ENCODE measurements at regions of chr19 and their contacts with region 1.

Region 1: DNA sequence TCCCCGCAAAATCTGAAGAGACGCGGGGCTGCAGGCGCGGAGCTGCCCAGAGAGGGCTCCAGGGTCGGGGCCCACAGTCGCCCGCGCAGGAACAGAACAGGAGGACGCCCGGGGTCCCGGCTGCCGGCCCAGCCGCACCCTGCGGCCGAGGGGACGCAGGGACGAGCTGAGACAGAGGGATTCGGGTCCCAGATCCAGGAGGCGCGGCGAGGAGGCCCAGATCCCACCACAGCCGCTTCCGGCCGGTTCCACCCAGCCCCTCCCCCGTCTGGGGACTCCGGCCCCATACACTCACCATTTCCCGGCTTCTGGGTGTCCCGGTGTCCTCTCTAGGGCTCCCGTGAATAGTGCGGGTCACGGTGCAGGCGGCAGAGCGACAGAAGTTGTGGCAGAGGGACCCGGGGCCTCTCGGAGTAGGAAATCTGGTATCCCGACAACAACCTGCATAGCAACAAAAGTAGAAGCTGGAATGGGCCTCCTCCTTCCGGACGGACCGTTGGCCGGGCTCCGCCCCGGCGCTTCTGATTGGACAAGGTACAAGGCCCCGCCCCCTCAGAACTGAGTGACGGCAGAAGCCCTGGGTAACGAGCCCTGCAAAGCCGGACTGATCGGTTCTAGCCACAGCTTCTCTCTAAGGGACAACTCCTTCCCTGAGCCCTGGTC is at the start of gene ZNF20:
- DNase-seq: peak; percentile 90
- ATAC-seq: peak; percentile 96
- H3K4me3 ChIP-seq: peak within 1 kb of the TSS; percentile 85 to 96 (median 93)
- H3K27ac ChIP-seq: peak within 1 kb of the TSS; percentile 86
- H3K4me1 ChIP-seq: peaks cover 23% of the 10 kb centered on the region
- H3K27me3 ChIP-seq: no peaks in the 10 kb centered on the region; a peak in 1 of 5 replicates
- CTCF ChIP-seq: no peak; the same call in none of the 2 replicates
- EP300 ChIP-seq: no peak
- POLR2A ChIP-seq: peak; percentile 60 to 73; a peak in 3 of 4 replicates
- RAD21 ChIP-seq: no peak
- total RNA-seq, gene ZNF20: 8.0 and 9.7 TPM in 2 replicates

Region 2: GRCh38 chr19:11798391-11799330 is 341.4 kb before region 1 on chr19 and contains the start of gene ZNF491:
- CTCF ChIA-PET with region 1: no interaction called
- POLR2A ChIA-PET with region 1: no interaction called
- in situ Hi-C with region 1: no loop called
- intact Hi-C with region 1: loop called (anchors 5 kb)
- DNase-seq: peak; percentile 87
- ATAC-seq: peak; percentile 98
- H3K4me3 ChIP-seq: peak within 1 kb of the TSS; percentile 63 to 90 (median 79)
- H3K27ac ChIP-seq: peak within 1 kb of the TSS; percentile 79
- H3K4me1 ChIP-seq: peaks cover 33% of the 10 kb centered on the region
- H3K27me3 ChIP-seq: no peaks in the 10 kb centered on the region; a peak in 1 of 5 replicates
- CTCF ChIP-seq: peak; percentile 69
- EP300 ChIP-seq: no peak
- POLR2A ChIP-seq: peak; percentile 79 to 88
- RAD21 ChIP-seq: peak; percentile 79
- total RNA-seq, gene ZNF491: 1.7 and 2.2 TPM in 2 replicates

Region 3: GRCh38 chr19:11924886-11925650 is 214.9 kb before region 1 on chr19 and contains the start of gene ZNF700:
- CTCF ChIA-PET with region 1: interaction called, 6 read pairs
- POLR2A ChIA-PET with region 1: interaction called, 16 read pairs
- in situ Hi-C with region 1: no loop called
- intact Hi-C with region 1: no loop called
- DNase-seq: peak; percentile 93
- ATAC-seq: peak; percentile 90
- H3K4me3 ChIP-seq: peak within 1 kb of the TSS; percentile 80 to 88 (median 85)
- H3K27ac ChIP-seq: peak within 1 kb of the TSS; percentile 97
- H3K4me1 ChIP-seq: peaks cover 51% of the 10 kb centered on the region
- H3K27me3 ChIP-seq: no peaks in the 10 kb centered on the region; a peak in 1 of 5 replicates
- CTCF ChIP-seq: no peak
- EP300 ChIP-seq: no peak
- POLR2A ChIP-seq: peak; percentile 84 to 97
- RAD21 ChIP-seq: peak; percentile 35
- total RNA-seq, gene ZNF700: 12.8 and 16.5 TPM in 2 replicates

Region 4: DNA sequence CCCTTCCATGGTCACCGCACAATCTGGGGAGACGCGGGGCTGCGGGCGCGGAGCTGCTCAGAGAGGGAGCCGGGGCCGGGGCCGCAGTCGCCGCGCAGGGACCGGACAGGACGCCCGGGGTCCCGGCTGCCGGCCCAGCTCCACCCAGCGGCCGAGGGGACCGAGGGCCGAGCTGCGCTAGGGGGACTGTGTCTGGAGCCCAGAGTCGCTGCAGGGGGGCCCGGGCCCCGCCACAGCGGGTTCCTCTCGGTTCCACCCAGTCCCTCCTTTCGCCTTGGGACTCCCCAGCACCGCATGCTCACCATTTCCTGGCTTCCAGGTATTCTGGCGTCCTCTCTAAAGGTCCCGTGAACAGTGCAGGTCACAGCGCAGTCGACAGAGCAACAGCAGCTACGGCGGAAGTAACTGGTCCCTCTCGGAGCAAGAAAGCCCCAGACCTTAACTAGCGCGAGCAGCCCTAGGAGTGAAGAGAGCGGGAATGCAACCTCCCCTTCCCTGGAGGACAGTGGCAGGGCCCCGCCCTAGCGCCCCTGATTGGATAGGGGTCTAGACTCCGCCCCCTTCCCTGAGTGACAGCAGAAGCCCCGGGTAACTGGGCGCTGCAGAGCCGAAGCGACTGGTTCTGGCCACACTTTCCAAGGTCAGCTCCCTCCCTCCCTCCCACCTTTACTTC is 87.4 kb before region 1 on chr19 and contains the start of gene ZNF878:
- CTCF ChIA-PET with region 1: interaction called, 6 read pairs
- POLR2A ChIA-PET with region 1: interaction called, 20 read pairs
- in situ Hi-C with region 1: loop called (anchors 5 kb)
- intact Hi-C with region 1: no loop called
- DNase-seq: peak; percentile 97
- ATAC-seq: peak; percentile 98
- H3K4me3 ChIP-seq: peak within 1 kb of the TSS; percentile 77 to 97 (median 90)
- H3K27ac ChIP-seq: peak within 1 kb of the TSS; percentile 93
- H3K4me1 ChIP-seq: peaks cover 45% of the 10 kb centered on the region
- H3K27me3 ChIP-seq: peaks cover 0 to 10% of the 10 kb centered on the region in 2 experiments; a peak in 2 of 5 replicates
- CTCF ChIP-seq: peak; percentile 51
- EP300 ChIP-seq: no peak
- POLR2A ChIP-seq: peak; percentile 100
- RAD21 ChIP-seq: peak; percentile 71
- total RNA-seq, gene ZNF878: 5.2 and 6.4 TPM in 2 replicates

Region 5: DNA sequence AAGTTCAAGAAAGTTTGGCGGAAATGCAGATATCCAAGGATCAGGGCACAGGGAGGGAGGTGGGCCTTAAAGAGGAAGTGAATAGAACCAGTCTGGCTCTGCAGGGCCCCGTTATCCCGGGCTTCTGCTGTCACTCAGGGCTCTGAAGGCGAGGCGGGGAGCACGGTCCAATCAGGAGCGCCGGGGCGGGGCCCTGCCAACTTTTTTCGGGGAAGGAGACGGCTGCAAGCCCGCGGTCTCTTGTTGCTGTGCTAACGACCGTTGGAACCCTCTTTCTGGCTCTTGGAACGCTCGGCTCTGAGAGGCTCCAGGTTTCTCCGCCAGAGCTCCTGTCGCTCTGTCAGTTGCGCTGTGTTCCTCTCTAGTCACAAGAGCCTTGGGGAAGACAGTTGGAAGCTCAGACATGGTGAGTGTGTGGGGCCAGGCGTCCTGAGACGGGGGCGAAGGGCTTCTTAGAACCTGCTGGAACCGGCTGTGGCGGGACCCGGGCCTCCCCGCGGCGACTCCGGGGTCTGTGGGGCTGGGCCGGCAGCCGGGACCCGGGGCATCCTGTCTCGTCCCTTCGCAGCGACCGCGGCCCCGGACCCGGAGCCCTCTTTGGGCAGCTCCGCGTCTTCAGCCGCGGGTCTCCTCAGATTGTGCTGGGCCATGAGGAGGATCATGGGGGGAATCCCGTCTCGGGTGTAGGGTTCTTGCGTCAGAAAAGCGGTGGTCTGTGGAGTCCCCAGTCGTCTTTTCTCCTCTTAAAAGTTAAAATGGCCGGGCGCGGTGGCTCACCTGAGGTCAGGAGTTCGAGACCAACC is 47.8 kb before region 1 on chr19:
- CTCF ChIA-PET with region 1: interaction called, 29 read pairs
- POLR2A ChIA-PET with region 1: interaction called, 19 read pairs
- in situ Hi-C with region 1: loop called (anchors 5 kb)
- intact Hi-C with region 1: loop called (anchors 1 kb)
- DNase-seq: peak; percentile 72
- ATAC-seq: peak; percentile 95
- H3K4me3 ChIP-seq: peak overlapping the region; percentile 68 to 79 (median 76)
- H3K27ac ChIP-seq: peak overlapping the region; percentile 81
- H3K4me1 ChIP-seq: peaks cover 17% of the 10 kb centered on the region
- H3K27me3 ChIP-seq: no peaks in the 10 kb centered on the region
- CTCF ChIP-seq: no peak
- EP300 ChIP-seq: no peak
- POLR2A ChIP-seq: peak; percentile 67 to 68
- RAD21 ChIP-seq: no peak

Region 6: GRCh38 chr19:12162882-12163806 is 23.1 kb after region 1 on chr19 and contains the start of gene ZNF136:
- CTCF ChIA-PET with region 1: no interaction called
- POLR2A ChIA-PET with region 1: interaction called, 10 read pairs
- in situ Hi-C with region 1: no loop called
- intact Hi-C with region 1: no loop called
- DNase-seq: peak; percentile 94
- ATAC-seq: peak; percentile 96
- H3K4me3 ChIP-seq: peak within 1 kb of the TSS; percentile 72 to 92 (median 90)
- H3K27ac ChIP-seq: peak within 1 kb of the TSS; percentile 94
- H3K4me1 ChIP-seq: peaks cover 60% of the 10 kb centered on the region
- H3K27me3 ChIP-seq: no peaks in the 10 kb centered on the region; a peak in 1 of 5 replicates
- CTCF ChIP-seq: 0 out of 2 replicates have a peak, but pooled peaks have one; percentile 7
- EP300 ChIP-seq: no peak
- POLR2A ChIP-seq: peak; percentile 77 to 81
- RAD21 ChIP-seq: no peak
- total RNA-seq, gene ZNF136: 10.2 and 16.6 TPM in 2 replicates

Region 7: DNA sequence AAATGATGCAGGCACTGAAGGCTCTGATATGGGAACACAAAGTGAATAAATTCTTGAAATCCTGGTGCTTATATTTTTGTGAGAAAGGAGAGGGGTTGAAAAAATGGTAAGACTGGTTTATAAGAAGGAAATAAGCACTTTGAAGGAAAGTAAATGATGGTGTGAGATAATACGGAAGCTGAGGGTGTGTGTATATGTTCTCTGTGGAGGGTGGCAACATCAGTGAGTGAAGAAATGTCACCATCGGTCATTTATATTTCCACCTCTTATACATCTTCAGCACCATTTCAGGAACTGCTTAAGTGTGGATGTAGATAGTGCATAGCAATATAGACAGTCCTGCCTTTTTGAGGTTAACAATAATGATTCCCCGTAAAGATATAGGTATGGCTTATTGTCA is 40.4 kb after region 1 on chr19:
- CTCF ChIA-PET with region 1: no interaction called
- POLR2A ChIA-PET with region 1: no interaction called
- in situ Hi-C with region 1: no loop called
- intact Hi-C with region 1: no loop called
- DNase-seq: no peak
- ATAC-seq: no peak
- H3K4me3 ChIP-seq: no peak overlapping the region
- H3K27ac ChIP-seq: no peak overlapping the region
- H3K4me1 ChIP-seq: peaks cover 10% of the 10 kb centered on the region
- H3K27me3 ChIP-seq: no peaks in the 10 kb centered on the region
- CTCF ChIP-seq: no peak
- EP300 ChIP-seq: no peak
- POLR2A ChIP-seq: no peak
- RAD21 ChIP-seq: no peak